GM10248 (cell line): ENCODE measurements at regions of chr18 and their contacts with region 1.

Region 1: GRCh38 chr18:36572135-36572856 is 256.5 kb downstream of the TPGS2 start:
- DNase-seq: peak; percentile 28
- CTCF ChIP-seq: peak; percentile 69

Region 2: GRCh38 chr18:36561046-36561445 is 11.2 kb before region 1 on chr18:
- CTCF ChIA-PET with region 1: interaction called, 10 read pairs
- POLR2A ChIA-PET with region 1: no interaction called
- DNase-seq: no peak
- CTCF ChIP-seq: no peak

Region 3: GRCh38 chr18:36608107-36608506 is 35.8 kb after region 1 on chr18:
- CTCF ChIA-PET with region 1: no interaction called
- POLR2A ChIA-PET with region 1: no interaction called
- DNase-seq: no peak
- CTCF ChIP-seq: no peak